Heart right ventricle (tissue), 16 donors: ENCODE measurements at regions of chr5 and their contacts with region 1.

Region 1: DNA sequence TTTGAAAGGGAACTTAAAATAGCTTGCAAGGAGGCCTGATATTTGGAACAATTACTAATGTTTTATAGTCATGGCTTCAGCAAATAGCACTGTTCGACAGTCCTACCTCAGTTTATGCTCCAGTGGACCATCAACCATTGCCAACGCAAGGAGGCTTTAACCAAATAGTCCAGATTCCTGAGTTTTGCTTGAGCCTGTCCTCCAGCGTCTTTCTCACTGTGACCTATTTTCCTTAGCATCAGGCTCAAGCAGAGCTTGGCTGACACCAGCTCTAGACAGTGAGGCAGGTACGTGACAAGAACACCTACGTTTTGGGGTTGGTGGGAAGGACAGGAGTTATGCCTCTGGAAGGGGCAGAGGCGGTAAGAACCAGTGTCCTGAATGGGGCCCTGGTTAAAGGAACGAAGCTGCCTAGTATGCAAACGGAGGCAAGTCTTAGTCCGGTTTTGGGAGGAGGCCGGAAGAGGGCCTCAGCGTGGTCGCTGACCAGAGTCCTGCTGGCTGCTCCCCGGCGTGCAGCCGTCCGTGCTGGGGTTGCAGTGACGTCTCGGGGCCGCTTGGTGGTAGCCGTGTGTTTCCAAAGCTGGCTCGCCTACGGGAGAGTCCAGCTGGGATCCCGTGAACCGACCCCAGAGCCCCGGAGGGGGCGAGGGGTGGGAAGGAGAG is 998 bp upstream of the FGF18 start:
- DNase-seq: peak; percentile 85
- ATAC-seq: peak; percentile 78 to 90 (median 86)
- H3K4me3 ChIP-seq: peak overlapping the region in 9 of 10 donors; percentile 42 to 66 (median 55)
- H3K27ac ChIP-seq: peak overlapping the region in 7 of 10 donors; percentile 7 to 90 (median 78)
- H3K4me1 ChIP-seq: peaks cover 15 to 48% (median 31%) of the 10 kb centered on the region in 9 donors
- H3K27me3 ChIP-seq: peaks cover 0 to 35% (median 0%) of the 10 kb centered on the region in 7 donors
- CTCF ChIP-seq: peak; percentile 84 to 98 (median 95)

Region 2: DNA sequence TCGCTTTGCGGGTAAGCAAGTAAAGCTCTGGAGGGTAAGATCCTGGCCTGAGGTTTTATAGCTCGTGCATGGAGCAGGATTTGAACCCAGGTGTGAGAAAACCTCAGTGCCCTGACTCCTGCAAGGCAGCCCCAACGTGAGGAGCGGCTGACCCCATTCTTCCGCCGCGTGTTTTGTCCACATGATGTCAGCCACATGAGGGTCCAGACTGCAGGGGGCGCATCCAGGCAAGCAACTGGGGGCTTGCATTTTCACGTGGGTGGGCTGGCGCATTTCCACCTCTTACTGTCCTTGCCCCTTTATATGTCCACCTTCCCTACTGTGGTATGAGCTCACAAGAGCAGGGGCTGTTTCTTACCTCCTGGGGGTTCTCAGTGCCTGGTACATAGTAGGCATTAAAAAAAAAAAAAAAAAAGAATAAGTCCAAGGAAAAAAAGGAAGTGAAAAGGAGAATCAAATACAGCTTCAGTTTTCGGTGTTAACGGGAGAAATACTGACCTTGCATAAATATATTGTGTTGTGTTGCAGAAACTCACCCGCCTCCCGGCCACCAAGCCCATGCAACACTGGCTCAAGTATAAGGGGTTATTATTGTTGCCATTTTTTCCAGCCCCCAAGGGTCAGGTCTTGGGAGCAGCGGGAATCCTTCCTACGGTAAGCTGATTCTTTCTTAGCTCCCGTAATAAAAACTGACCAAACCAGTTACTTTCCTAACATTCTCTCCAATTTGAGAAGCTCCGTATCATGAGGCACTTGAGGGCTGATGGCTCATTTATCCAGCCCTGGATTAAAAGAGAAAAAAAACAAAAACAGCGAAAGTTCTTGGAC is 94.4 kb before region 1 on chr5:
- intact Hi-C with region 1: no loop called
- DNase-seq: no peak
- ATAC-seq: peak in 1 of 8 donors; percentile 38
- H3K4me3 ChIP-seq: no peak overlapping the region
- H3K27ac ChIP-seq: no peak overlapping the region
- H3K4me1 ChIP-seq: no peaks in the 10 kb centered on the region
- H3K27me3 ChIP-seq: peaks cover 0 to 99% (median 94%) of the 10 kb centered on the region in 7 donors
- CTCF ChIP-seq: no peak

Region 3: DNA sequence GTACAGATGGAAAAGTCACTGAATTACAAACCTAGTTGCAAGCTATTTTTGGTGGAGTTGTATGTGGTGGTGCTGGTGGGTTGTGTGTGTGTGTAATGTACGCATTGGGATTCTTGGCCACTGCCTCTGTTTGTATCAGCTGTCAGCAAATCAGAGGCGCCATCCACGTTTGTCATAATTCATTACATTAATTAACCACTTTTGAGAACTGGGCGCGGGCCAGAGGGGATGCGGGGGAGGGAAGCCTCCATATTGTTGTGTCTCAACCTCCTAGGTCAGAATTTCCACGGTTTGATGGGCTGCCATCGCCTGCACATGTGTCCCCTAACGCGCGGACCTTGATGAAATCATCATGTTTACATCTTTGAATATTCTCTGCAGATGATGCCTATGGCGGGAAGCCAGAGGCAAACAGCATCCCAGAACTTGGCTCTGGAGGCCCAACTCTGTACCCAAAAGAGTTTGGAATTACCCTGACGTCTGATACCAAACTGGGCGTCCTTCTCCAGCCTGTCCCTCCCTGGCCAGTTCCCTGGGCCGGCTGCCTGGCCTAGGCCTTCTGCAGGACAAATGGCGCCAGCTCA is 55.9 kb after region 1 on chr5:
- intact Hi-C with region 1: loop called in 1 of 10 experiments (anchors 10 kb)
- DNase-seq: no peak
- ATAC-seq: peak in 7 of 8 donors; percentile 19 to 91 (median 67)
- H3K4me3 ChIP-seq: no peak overlapping the region
- H3K27ac ChIP-seq: peak overlapping the region in 3 of 10 donors; percentile 13 to 34 (median 14)
- H3K4me1 ChIP-seq: peaks cover 0 to 14% (median 5%) of the 10 kb centered on the region in 9 donors
- H3K27me3 ChIP-seq: no peaks in the 10 kb centered on the region
- CTCF ChIP-seq: no peak

Region 4: GRCh38 chr5:171580502-171581265 is 162.2 kb after region 1 on chr5:
- intact Hi-C with region 1: loop called in 2 of 10 experiments (anchors 10 kb)
- DNase-seq: peak in 1 of 2 donors; percentile 24
- ATAC-seq: peak; percentile 29 to 71 (median 53)
- H3K4me3 ChIP-seq: no peak overlapping the region
- H3K27ac ChIP-seq: peak overlapping the region in 8 of 10 donors; percentile 8 to 82 (median 66)
- H3K4me1 ChIP-seq: peaks cover 10 to 41% (median 28%) of the 10 kb centered on the region in 9 donors
- H3K27me3 ChIP-seq: no peaks in the 10 kb centered on the region
- CTCF ChIP-seq: no peak

Region 5: DNA sequence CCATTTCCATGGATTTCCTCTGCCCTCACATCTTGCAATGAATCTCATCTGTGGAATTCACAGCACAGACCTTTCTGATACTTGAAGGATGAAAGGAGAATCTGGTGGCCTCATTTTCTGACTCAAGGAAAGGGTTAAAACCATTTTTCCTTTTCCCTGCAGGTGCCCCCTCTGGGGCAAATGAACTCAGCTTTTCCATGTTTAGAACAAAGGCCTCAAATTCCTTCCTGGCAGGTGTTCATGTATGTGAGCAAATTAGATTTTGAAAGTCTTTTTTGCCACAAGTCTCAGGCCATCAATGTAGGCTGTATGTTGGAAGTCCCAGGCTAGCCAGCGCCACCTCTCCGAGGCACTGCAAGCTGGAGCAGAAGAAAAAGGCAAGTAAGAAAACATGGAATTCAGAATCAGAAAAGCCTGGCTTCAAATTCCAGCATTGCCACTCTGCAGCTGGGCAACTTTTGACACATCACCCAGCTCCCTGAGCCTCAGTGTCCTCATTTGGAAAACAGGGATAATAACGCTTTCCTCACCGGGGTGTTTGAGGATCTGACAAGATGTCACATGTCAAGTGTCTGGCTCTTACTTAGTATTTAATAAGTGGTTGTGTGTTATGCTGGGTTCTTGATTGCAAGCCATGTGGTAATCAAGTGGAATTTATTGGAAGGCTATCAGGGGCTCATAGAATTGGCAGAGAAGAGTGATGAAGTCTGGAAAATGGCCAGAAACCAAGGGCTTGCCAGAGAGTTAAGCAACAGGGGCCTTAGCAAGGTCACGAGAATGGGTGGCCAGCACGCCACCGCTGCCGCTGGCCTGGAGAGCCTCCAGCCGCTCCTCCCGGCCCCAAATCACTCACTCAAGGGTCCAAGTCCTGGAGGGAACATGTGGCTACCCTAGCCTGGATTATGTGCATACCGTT is 318.8 kb after region 1 on chr5:
- intact Hi-C with region 1: loop called in 4 of 10 experiments (anchors 10 kb)
- DNase-seq: peak; percentile 71 to 73
- ATAC-seq: peak; percentile 75 to 88 (median 82)
- H3K4me3 ChIP-seq: peak overlapping the region in 6 of 10 donors; percentile 6 to 45 (median 34)
- H3K27ac ChIP-seq: peak overlapping the region in 9 of 10 donors; percentile 38 to 81 (median 78)
- H3K4me1 ChIP-seq: peaks cover 5 to 28% (median 14%) of the 10 kb centered on the region in 9 donors
- H3K27me3 ChIP-seq: no peaks in the 10 kb centered on the region
- CTCF ChIP-seq: peak in 3 of 9 donors; percentile 31 to 40 (median 34)

Region 6: GRCh38 chr5:171863930-171864329 is 445.5 kb after region 1 on chr5:
- intact Hi-C with region 1: loop called in 1 of 10 experiments (anchors 10 kb)
- DNase-seq: no peak
- ATAC-seq: peak in 2 of 8 donors; percentile 47 to 48
- H3K4me3 ChIP-seq: no peak overlapping the region
- H3K27ac ChIP-seq: no peak overlapping the region
- H3K4me1 ChIP-seq: peaks cover 0 to 19% (median 2%) of the 10 kb centered on the region in 9 donors
- H3K27me3 ChIP-seq: no peaks in the 10 kb centered on the region
- CTCF ChIP-seq: no peak

Region 7: GRCh38 chr5:172044631-172045314 is 626.3 kb after region 1 on chr5:
- intact Hi-C with region 1: loop called in 5 of 10 experiments (anchors 10 kb)
- DNase-seq: no peak
- ATAC-seq: no peak
- H3K4me3 ChIP-seq: no peak overlapping the region
- H3K27ac ChIP-seq: peak overlapping the region in 1 of 10 donors; percentile 15
- H3K4me1 ChIP-seq: peaks cover 0 to 28% (median 14%) of the 10 kb centered on the region in 9 donors
- H3K27me3 ChIP-seq: no peaks in the 10 kb centered on the region
- CTCF ChIP-seq: no peak